GM12878 (cell line): ENCODE measurements at regions of chr15 and their contacts with region 1.

Region 1: GRCh38 chr15:38252481-38253412 is at the start of gene SPRED1:
- DNase-seq: no peak
- ATAC-seq: peak; percentile 57
- H3K4me3 ChIP-seq: peak within 1 kb of the TSS; percentile 94
- H3K27ac ChIP-seq: peak within 1 kb of the TSS; percentile 62
- H3K4me1 ChIP-seq: peaks cover 3% of the 10 kb centered on the region; the same call in 1 of the 2 replicates
- H3K27me3 ChIP-seq: no peaks in the 10 kb centered on the region; a peak in 2 of 4 replicates
- CTCF ChIP-seq: no peak
- EP300 ChIP-seq: no peak
- POLR2A ChIP-seq: no peak
- RAD21 ChIP-seq: no peak
- polyA plus RNA-seq, gene SPRED1: 0.08 to 0.13 TPM

Region 2: GRCh38 chr15:38196076-38196475 is 56.7 kb before region 1 on chr15:
- CTCF ChIA-PET with region 1: no interaction called
- POLR2A ChIA-PET with region 1: no interaction called
- RAD21 ChIA-PET with region 1: no interaction called
- SMC1A ChIA-PET with region 1: no interaction called
- in situ Hi-C with region 1: no loop called
- intact Hi-C with region 1: no loop called
- DNase-seq: no peak
- ATAC-seq: no peak
- H3K4me3 ChIP-seq: no peak overlapping the region
- H3K27ac ChIP-seq: no peak overlapping the region
- H3K4me1 ChIP-seq: no peaks in the 10 kb centered on the region; the same call in 1 of the 2 replicates
- H3K27me3 ChIP-seq: no peaks in the 10 kb centered on the region; a peak in 1 of 4 replicates
- CTCF ChIP-seq: no peak
- EP300 ChIP-seq: no peak
- POLR2A ChIP-seq: no peak
- RAD21 ChIP-seq: no peak

Region 3: DNA sequence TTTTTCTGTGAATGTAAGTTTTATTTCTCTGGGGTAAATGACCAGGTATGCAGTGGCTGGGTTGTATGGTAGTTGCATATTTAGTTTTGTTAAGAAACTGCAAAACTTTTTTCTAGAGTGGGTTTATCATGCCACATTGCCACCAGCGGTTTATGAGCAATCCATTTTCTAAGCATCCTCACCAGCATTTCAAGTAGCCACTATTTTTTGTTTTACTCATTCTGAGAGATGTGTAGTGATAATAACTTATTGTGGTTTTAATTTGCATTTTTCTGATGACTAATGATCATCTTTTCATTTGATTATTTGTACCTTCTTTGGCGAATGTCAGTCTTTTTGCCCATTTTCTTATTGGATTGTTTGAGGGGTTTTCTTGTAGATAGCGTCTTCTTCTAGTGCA is 56.0 kb after region 1 on chr15:
- CTCF ChIA-PET with region 1: no interaction called
- POLR2A ChIA-PET with region 1: interaction called, 3 read pairs
- RAD21 ChIA-PET with region 1: no interaction called
- SMC1A ChIA-PET with region 1: no interaction called
- in situ Hi-C with region 1: no loop called
- intact Hi-C with region 1: loop called (anchors 5 kb)
- DNase-seq: peak; percentile 40
- ATAC-seq: peak; percentile 92
- H3K4me3 ChIP-seq: no peak overlapping the region
- H3K27ac ChIP-seq: no peak overlapping the region
- H3K4me1 ChIP-seq: peaks cover 13% of the 10 kb centered on the region
- H3K27me3 ChIP-seq: no peaks in the 10 kb centered on the region
- CTCF ChIP-seq: no peak
- EP300 ChIP-seq: peak in 1 of 2 experiments; percentile 53; a peak in 1 of 4 replicates
- POLR2A ChIP-seq: no peak
- RAD21 ChIP-seq: no peak